ENCODE measurements at regions of chr1 and their contacts with region 1.

Region 1: DNA sequence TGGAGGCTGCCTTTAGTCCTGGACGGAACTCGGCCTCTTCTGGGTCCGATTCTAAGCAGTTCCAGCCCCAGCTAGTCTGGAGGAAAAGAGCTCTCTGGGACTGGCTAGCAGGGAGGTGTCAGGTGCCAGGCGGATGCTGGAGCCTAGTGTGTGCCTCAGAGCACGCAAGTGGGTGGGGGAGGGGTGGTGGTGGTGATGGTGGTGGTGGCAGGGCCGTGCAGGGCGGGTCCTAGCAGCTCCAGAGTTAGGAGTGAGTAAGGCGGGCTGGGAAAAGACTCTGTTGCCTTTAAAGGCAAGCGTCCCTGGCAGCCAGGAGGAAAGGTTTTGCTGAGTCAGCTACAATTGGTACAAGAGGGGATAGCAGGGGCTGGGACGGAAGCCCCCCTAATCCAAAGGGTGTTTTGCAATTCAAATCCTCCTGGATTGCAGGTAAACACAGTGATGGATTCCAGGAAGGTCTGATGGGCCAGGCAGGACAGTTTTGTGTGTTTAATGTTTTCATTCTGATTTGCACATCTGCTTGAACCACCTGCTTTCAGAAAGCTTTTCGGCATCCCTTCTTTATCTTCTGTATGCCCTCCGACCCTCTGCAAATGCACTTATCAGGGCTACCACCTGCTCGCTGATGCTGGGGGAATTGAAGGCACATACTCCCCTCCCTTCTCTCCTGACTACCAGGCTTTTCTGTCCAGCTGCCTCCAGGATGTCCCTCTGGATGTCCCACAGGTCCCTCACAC is 4.1 kb upstream of the SLC2A1 start:
- DNase-seq: peak; percentile 69 to 96
- H3K4me3 ChIP-seq: peak overlapping the region in 1 of 2 donors; percentile 23
- H3K27ac ChIP-seq: peak overlapping the region; percentile 97 to 99
- H3K4me1 ChIP-seq: peaks cover 0 to 51% (median 32%) of the 10 kb centered on the region in 4 donors
- H3K27me3 ChIP-seq: peaks cover 0 to 3% of the 10 kb centered on the region in 2 donors
- CTCF ChIP-seq: no peak

Region 2: DNA sequence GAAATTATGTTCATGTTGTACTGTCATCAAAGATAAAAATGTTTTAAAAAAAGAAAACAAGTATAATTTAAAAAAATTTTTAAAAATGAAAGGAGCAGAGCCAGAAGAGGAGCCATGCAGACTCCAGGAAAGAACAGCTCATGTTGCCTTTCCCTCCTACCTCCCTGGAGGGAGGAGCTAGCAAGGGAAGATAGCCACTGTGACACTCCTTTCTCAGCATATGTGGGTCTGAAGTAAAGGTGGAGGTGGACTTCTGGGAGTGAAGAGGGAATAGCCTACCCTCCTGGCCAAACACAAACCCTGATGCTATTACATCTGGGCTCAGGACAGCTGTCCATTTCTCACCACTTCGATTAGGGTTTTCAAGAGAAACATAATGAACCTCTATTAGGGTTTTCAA is 58.4 kb before region 1 on chr1:
- intact Hi-C with region 1: no loop called
- DNase-seq: no peak
- H3K4me3 ChIP-seq: no peak overlapping the region
- H3K27ac ChIP-seq: no peak overlapping the region
- H3K4me1 ChIP-seq: no peaks in the 10 kb centered on the region
- H3K27me3 ChIP-seq: peaks cover 0 to 11% of the 10 kb centered on the region in 2 donors
- CTCF ChIP-seq: no peak

Region 3: GRCh38 chr1:42924082-42924850 is 38.5 kb before region 1 on chr1:
- intact Hi-C with region 1: loop called (anchors 5 kb)
- DNase-seq: peak; percentile 96 to 98
- H3K4me3 ChIP-seq: peak overlapping the region; percentile 67 to 81
- H3K27ac ChIP-seq: peak overlapping the region; percentile 96 to 98
- H3K4me1 ChIP-seq: peaks cover 0 to 19% (median 6%) of the 10 kb centered on the region in 4 donors
- H3K27me3 ChIP-seq: no peaks in the 10 kb centered on the region
- CTCF ChIP-seq: peak in 1 of 2 experiments; percentile 17

Measured in tibial artery (tissue), 4 donors.